Head of caudate nucleus (tissue), 42 donors: ENCODE measurements at regions of chr10 and their contacts with region 1.

Region 1: DNA sequence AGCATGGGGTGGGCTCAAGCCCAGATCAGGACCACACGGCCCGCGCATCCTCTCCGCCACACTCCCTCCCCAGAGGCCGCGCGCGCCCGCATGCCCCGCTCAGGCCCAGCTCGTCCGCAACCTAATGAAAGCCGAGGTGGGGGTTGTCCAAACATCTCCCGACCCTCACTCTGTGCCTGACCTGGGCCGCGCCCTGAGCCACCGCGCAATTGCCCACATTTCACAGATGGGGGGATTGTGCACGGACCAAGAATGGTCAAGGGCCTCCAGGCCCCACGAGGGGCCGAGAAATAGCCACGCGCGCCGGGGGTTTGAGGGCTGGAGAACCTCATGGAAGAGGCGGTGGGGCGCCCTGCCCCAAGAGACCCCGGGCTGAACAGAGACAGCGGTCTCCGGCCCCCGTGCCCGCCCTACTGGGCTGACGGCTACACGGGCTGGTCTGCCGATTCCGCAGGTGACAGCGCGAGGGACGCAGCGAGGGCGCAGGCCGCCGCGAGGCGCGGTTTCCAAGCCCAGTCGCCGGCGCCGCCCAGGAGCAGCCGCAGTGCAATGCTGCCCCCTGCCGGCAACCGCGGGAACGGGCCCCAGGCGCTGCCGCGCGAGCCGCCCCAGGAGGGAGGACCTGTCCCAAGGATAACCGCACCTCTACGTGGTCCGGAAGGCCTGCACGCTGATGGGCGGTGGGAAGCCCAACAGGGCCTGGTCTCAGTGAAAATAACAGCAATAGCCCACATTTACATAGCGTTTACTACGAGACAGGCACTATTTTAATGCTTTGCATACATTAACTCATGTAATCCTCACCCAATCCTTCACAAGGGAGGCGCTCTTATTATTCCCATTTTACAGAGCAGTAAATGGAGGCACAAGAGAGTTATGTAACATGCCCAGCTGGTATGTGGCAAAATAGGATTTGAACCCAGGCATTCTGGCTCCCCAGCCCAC is 10.5 kb upstream of the GRID1 start:
- DNase-seq: peak in 41 of 42 donors; percentile 63 to 93 (median 83)

Region 2: GRCh38 chr10:85995791-85996190 is 381.3 kb before region 1 on chr10:
- intact Hi-C with region 1: loop called (anchors 10 kb)
- DNase-seq: peak in 35 of 42 donors; percentile 15 to 80 (median 52)

Region 3: DNA sequence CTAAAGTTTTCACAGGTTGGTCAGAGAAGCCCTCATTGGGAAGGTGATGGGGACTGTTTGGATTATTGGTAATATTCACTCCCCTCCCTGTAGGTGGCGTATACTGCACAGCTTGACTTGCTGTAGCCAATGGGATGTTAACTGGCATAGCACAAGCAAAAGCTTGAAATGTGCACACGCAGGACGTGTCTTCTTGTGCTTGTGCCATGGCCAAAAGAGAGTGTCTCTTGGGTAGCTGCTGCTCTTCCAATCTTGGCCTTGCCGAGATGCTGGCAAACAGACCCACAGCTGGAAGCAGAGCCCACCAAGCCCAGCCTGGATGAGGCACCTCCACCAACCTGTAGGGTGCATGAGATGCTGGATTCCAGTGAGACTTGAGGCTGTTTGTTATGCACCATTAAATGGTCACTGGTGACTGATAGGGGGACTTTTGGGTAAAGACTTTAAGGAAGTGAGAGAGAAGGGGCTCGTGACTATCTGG is 276.5 kb before region 1 on chr10:
- intact Hi-C with region 1: no loop called
- DNase-seq: peak in 8 of 42 donors; percentile 25 to 58 (median 38)